Lower leg skin (tissue), 4 donors: ENCODE measurements at regions of chr5 and their contacts with region 1.

Region 1: DNA sequence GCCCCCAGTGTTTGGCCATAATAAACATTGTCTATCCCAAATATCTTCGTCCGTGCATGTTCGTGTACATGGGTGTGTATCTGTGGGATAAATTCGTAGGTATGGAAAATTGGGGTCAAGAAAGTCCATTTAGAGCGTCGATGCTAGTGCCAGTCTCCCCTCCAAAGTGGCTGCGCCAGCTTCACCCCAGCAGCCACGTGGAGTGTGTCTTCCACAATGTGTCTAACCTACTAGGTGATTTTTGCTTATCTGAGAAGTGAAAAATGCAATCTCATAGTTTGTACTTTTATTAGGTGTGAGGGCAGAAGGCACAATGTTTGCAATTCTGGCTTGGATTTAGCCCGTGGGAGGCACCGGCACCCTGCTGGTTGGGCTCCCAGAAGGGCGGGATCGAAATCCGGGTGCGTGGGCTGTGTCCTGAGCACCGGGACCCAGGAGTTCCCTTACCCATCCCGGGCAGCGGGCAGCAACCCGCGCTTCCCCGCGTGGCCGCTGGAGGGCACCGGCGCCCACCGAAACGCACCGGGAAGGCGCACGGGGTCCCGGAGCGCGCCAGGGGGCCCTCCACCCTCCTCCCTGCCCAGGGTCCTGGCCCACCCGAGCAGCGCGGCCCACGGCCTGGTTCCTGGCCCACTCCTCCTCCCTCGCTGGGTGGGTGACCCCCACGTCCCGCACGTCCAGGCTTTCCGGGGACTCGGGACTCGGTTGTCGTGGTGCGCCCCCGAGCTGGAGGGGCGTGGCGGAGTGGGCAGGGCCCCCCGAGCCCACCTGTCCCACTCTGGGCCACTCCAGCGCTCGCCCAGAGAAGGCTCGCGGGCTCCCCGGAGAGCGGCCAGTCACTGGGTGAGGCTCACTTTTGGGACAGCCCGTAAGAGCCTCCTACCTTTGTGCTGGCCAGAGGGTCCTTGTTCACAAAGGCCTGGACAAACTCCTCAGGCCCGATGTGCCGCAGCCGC is 55.4 kb upstream of the RNF130 start:
- DNase-seq: peak in 1 of 2 donors; percentile 85
- H3K4me3 ChIP-seq: no peak overlapping the region
- CTCF ChIP-seq: peak in 1 of 3 donors; percentile 36
- POLR2A ChIP-seq: no peak

Region 2: DNA sequence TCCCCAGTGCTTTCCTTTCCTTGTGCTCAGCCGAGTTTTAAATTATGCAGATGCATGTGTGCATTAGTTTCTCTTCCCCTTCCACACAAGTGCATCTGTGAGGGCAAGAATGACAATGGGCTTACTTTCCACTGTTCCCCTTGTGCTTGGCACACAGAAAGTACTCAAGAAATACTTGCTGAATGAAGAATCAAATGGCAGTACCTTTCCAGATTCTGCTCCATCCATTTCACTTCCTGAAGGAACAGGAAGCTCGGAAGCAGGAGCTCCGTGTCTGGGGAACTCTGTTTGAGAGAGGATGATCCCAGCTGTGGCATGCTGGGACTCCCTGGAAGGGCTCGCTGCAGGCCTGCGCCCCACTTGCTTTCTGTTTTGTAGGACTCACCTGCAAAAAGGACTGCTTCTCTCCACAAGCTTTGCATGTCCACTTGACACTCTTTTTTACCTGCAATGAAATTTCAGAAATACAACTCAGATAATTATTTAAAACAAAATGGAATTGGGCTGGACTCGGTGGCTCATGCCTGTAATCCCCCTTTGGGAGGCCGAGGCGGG is 273.9 kb before region 1 on chr5:
- intact Hi-C with region 1: no loop called
- DNase-seq: no peak
- H3K4me3 ChIP-seq: no peak overlapping the region
- CTCF ChIP-seq: no peak
- POLR2A ChIP-seq: no peak

Region 3: GRCh38 chr5:180315762-180316212 is 188.8 kb after region 1 on chr5:
- intact Hi-C with region 1: no loop called
- DNase-seq: peak in 1 of 2 donors; percentile 91
- H3K4me3 ChIP-seq: no peak overlapping the region
- CTCF ChIP-seq: peak in 1 of 3 donors; percentile 64
- POLR2A ChIP-seq: no peak

Region 4: DNA sequence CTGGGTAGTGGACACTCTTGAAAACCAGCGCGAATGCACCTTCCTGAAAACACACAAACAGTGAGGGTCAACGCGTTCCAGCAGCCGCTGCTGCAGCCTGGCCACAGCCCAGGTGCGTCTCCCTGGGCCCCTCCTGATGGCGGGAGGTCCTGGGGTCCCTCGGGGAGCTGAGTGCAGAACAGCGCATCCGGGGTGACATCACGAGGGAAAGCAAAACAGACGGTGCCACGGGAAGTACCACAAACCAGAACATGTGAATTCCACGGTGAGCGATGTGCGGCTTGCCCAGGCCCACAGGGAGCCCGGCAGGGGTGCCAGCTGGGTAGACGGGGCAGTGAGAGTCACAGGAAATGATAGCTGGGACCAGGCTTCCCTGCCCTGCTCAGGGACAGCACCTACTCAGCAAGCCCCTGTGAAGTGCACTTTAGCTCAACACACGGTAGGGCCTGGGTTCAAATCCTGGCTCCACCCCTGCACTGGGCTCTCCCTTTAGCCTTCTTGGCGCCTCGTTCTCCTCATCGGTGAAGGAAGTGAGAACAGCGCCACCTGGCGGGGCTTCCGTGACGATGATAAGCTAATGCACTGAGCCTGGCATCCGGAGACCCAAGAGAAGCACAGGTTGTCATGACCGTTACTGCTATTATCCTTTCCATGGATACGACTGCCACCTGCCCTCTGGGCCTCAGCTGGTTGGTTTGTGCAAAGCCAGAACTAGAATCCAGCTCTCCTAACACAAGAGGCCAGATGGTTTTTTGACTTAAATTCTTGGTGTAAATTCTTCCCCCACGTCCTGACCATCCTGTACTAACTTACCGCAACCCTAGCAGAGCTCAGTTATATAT is 201.5 kb after region 1 on chr5:
- intact Hi-C with region 1: loop called (anchors 5 kb)
- DNase-seq: peak; percentile 71 to 96
- H3K4me3 ChIP-seq: no peak overlapping the region
- CTCF ChIP-seq: peak in 1 of 3 donors; percentile 19
- POLR2A ChIP-seq: no peak

Region 5: DNA sequence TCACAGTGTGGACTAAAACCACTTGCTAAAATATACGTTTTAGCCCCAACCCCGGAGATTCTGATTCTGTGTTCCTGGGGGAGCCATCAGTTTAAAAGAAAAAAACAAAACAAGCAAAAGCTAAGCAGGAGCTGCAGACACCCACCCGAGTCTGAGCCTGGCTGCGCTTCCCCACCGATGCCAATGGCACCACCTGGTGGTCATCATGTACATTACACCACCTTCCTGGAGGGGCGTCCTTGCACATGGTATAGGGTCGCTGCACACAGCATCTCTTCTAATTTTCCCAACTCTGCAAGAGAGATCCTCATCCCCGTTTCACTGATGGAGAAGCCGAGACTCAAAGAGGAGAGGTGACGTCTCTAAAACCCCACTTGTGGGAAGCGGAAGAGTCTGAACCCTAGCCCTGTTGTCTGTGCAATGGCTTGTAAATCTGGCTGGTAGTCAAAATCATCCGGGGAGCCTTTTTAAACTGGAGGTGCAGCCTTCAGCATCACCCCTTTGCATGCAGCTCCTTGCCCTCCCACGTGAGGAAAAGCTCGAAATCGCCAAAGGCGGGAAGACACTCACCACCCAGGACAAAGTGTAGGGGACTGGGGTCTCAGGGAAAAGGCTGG is 344.1 kb after region 1 on chr5:
- intact Hi-C with region 1: loop called (anchors 10 kb)
- DNase-seq: peak; percentile 36 to 88
- H3K4me3 ChIP-seq: no peak overlapping the region
- CTCF ChIP-seq: peak in 1 of 3 donors; percentile 56
- POLR2A ChIP-seq: no peak